Activated CD4-positive, alpha-beta memory T cell treated with anti-CD3 and anti-CD28 coated beads for 36 hours (primary cell): ENCODE measurements at regions of chr17 and their contacts with region 1.

Region 1: GRCh38 chr17:82297714-82298537 is 19.5 kb downstream of the CD7 start:
- DNase-seq: peak; percentile 96
- H3K4me3 Mint-ChIP-seq: peak overlapping the region; percentile 93
- H3K27ac Mint-ChIP-seq: peak overlapping the region; percentile 100
- H3K4me1 Mint-ChIP-seq: peaks cover 77% of the 10 kb centered on the region
- H3K27me3 Mint-ChIP-seq: no peaks in the 10 kb centered on the region

Region 2: DNA sequence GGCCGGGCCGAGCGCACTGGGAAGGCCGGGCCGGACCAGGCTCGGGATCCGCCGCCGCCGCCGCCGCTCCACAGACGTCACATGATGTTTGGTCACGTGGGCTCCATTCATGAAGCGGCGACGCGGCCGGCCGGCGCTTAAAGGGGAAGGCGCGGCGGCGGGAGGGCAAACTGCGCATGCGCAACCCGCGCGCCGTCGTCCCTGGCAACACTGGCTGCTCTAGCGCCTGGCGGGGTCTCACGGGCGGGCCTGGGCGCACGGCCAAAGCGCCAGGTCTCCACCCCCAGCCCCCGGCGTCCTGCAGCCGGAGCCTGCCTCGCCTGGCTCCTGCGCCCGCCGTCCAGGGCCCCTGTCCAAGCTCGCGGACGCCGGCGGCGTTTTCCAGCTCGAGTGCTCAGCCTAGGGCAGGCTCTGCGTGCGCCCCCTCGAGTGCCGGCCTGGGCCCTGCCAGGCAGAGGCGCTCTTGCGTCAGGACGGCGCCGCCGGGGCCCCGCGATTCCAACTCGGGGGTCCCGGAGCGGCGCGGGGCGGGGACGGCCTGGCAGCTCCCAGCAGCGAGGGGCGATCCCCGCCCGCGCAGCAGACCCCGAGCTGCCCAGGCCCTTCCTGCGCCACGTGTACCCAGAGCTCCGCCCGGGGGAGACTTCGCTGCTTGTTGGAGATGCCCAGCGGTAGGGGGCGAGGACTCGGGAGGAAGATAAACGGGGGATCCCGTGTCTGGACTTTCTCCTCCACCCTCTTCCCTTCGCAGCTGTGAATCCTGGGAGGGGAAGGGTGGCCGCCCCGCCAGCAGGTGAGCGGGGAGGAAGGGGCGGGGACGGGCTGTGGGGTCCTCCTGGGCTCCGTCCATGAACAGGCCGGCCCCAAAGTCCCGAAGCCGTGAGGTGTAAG is 370.0 kb before region 1 on chr17 and contains the start of gene MAFG:
- CTCF ChIA-PET with region 1: no interaction called
- POLR2A ChIA-PET with region 1: no interaction called
- intact Hi-C with region 1: no loop called
- DNase-seq: peak; percentile 92
- H3K4me3 Mint-ChIP-seq: peak within 1 kb of the TSS; percentile 83
- H3K27ac Mint-ChIP-seq: peak within 1 kb of the TSS; percentile 87
- H3K4me1 Mint-ChIP-seq: peaks cover 15% of the 10 kb centered on the region
- H3K27me3 Mint-ChIP-seq: peaks cover 11% of the 10 kb centered on the region
- total RNA-seq, gene MAFG: 23.4 to 24.1 TPM

Region 3: GRCh38 chr17:81980707-81981343 is 317.1 kb before region 1 on chr17:
- CTCF ChIA-PET with region 1: no interaction called
- POLR2A ChIA-PET with region 1: no interaction called
- intact Hi-C with region 1: no loop called
- DNase-seq: no peak
- H3K4me3 Mint-ChIP-seq: no peak overlapping the region
- H3K27ac Mint-ChIP-seq: no peak overlapping the region
- H3K4me1 Mint-ChIP-seq: peaks cover 35% of the 10 kb centered on the region
- H3K27me3 Mint-ChIP-seq: no peaks in the 10 kb centered on the region

Region 4: DNA sequence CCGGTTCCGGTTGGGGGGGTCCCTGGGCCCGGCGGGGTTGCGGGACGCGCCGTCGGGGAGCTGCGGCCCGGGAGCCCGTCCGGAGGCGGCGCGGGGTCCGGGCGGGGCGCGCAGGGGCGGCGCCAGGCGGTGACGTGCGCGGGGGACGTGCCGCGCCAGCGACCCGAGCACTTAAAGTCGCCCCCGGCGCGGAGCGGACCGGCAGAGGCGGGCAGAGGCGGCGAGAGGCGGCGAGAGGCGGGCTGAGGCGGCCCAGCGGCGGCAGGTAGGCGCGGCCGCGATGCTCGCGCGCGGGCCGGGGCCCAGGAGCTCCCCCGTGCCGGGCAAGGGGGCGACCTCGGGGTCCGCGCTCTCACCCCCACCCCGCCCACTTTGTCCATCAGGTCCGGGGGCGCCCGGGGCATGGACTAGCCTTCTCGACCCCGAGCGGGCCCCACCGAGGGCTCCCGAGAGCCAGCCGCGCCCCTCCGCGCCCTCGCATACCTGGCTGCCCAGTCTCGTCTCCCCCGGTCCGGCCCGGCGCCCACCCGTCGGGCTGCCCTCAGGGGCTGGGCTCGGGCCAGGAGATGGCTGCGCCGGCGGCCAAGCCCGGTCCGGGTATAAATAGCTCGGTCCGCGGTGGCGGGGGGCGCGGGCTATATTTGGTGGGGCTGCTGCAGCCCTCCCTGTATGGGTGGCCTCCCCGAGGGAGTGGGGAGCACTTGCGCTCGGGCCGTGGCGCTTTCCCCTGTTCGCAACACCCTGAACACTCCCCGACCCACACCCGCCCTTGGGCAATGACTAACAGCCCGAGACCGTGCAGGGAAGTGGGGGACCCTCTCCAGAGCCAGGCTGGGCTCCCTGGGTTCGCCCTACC is 68.9 kb before region 1 on chr17 and contains the start of gene SLC16A3:
- CTCF ChIA-PET with region 1: interaction called, 5 read pairs
- POLR2A ChIA-PET with region 1: interaction called, 10 read pairs
- intact Hi-C with region 1: no loop called
- DNase-seq: peak; percentile 66
- H3K4me3 Mint-ChIP-seq: peak within 1 kb of the TSS; percentile 82
- H3K27ac Mint-ChIP-seq: peak within 1 kb of the TSS; percentile 84
- H3K4me1 Mint-ChIP-seq: peaks cover 9% of the 10 kb centered on the region
- H3K27me3 Mint-ChIP-seq: no peaks in the 10 kb centered on the region
- total RNA-seq, gene SLC16A3: 97.4 to 99.7 TPM

Region 5: DNA sequence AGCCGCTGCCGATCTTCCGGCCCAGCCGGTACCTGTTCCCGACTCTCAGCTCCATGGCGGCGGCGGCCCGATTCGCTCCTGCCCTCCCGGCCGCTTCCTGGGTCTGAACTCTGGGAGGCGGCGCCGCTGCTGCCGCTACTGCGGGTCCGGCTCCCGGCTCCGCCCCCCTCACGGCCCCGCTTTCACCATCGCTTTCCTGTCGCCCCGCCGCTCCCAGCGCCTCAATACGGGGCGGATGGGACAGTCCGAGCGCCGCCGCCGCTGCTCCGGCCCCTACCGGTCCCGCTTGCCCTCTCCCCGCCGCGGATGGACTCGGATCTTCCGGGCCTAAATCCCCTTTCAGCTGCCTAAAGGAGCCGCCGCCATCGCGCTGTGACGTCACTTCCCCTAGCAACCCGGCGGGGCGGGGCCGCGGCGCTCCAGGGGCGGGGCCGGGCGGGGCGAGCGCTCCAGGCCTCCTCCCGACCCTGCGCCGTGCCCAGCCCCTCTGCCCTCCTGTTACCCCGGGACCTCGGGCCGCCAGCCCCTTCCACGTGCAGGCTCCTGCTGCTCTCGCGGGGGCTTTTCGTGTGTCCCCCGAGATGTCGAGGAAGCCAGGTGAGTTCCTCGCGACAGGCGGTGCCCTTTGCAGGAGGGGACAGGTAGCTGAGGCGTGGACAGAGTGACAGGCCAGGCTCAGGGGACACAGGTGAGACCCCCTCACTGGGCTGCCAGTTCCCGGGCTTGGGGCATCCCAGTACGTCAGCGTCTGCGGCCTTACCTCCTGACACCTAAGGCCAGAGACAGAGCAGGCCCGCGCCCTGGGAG is 24.4 kb before region 1 on chr17 and contains the start of gene CSNK1D:
- CTCF ChIA-PET with region 1: interaction called, 10 read pairs
- POLR2A ChIA-PET with region 1: interaction called, 19 read pairs
- intact Hi-C with region 1: no loop called
- DNase-seq: peak; percentile 94
- H3K4me3 Mint-ChIP-seq: peak within 1 kb of the TSS; percentile 88
- H3K27ac Mint-ChIP-seq: peak within 1 kb of the TSS; percentile 98
- H3K4me1 Mint-ChIP-seq: peaks cover 40% of the 10 kb centered on the region
- H3K27me3 Mint-ChIP-seq: no peaks in the 10 kb centered on the region
- total RNA-seq, gene CSNK1D: 110 to 111 TPM

Region 6: GRCh38 chr17:82309656-82310570 is 12.0 kb after region 1 on chr17:
- CTCF ChIA-PET with region 1: interaction called, 12 read pairs
- POLR2A ChIA-PET with region 1: interaction called, 67 read pairs
- intact Hi-C with region 1: loop called (anchors 1 kb)
- DNase-seq: no peak
- H3K4me3 Mint-ChIP-seq: no peak overlapping the region
- H3K27ac Mint-ChIP-seq: no peak overlapping the region
- H3K4me1 Mint-ChIP-seq: peaks cover 40% of the 10 kb centered on the region
- H3K27me3 Mint-ChIP-seq: no peaks in the 10 kb centered on the region

Region 7: DNA sequence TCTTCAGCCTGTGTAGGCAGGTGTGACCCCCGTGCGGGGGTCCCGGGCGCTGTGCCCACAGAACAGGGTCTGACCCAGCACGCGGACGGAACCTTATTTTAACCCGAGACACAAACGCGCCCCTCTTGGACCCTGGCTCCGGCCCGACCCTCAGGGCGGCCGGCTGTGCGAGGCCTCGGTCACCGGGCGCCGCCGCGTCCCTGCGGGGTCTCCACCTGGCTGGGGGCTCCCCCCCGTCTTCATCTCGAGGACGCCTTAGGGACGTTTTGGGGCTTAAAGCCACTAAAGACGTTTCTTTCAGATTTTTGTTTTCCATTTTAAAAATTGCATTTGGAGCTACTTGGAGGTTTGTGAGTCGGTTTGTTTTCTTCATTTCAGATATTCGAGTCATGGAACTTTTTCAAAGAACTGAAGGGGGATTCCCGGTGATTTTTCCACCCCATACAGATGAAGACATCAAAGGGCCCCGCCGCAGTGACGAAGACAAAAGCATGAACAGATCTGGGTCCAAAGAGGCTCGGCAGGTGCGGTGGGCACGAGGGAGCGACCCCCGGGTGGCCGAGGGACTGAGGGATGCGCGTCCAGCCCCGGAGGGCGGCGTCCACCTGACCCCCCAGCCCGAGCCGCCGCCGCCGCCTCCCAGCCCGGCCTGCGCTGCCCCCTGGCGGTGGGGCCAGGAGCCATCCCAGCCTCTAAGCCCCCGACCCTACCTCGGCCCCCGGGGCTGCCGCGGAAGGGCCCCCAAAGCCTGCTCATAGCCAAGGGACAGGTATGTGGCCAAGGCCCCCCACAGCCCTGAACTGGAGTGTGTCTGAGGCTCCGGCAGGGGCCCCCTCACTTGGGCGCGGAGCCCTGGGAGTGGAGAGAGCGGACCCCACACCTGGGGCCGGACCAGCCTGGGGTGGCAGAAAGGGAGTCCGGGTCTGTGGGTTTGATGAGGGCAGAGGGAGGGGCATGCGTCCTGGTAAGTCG is 23.3 kb after region 1 on chr17:
- CTCF ChIA-PET with region 1: interaction called, 113 read pairs
- POLR2A ChIA-PET with region 1: interaction called, 103 read pairs
- intact Hi-C with region 1: loop called (anchors 1 kb)
- DNase-seq: peak; percentile 88
- H3K4me3 Mint-ChIP-seq: peak overlapping the region; percentile 80
- H3K27ac Mint-ChIP-seq: no peak overlapping the region
- H3K4me1 Mint-ChIP-seq: peaks cover 32% of the 10 kb centered on the region
- H3K27me3 Mint-ChIP-seq: no peaks in the 10 kb centered on the region

Region 8: DNA sequence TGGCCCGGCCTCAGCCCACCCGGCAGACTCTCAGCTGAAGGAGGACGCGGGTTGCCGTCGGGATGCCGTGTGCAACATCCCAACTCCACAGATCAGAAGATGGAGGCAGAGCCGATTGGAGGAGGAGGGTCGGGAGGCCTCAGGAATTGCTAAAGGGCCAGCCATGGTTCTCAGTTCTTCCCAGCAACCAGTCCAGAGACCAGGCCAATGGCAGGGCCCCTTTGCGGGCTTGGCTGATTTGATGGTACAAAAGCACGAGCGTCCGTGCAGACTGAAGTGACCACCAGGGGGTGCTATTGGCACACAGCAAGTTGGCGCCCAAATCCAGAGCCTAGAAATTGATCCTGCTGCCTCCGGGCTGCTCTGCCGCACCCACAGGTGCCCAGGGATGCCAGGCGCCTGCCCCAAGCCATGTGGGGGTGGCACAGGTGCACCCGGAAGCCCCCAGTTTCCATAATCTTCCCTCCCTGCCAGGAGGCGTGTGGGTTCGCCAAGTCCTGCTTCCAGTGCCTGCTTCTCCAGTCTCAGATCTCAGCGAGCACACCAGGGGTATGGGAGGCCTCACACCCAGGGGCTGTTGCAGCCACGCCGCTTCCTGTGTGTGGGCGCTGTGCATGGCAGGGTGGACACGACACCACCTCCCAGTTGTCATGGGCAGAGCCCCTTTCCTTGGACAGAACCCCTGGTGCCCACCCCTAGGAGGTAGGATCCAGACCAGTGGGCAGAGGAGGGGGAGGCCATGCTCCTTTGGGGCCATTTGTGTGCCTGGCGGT is 54.0 kb after region 1 on chr17:
- CTCF ChIA-PET with region 1: interaction called, 27 read pairs
- POLR2A ChIA-PET with region 1: no interaction called
- intact Hi-C with region 1: loop called (anchors 5 kb)
- DNase-seq: peak; percentile 88
- H3K4me3 Mint-ChIP-seq: no peak overlapping the region
- H3K27ac Mint-ChIP-seq: no peak overlapping the region
- H3K4me1 Mint-ChIP-seq: peaks cover 4% of the 10 kb centered on the region
- H3K27me3 Mint-ChIP-seq: peaks cover 4% of the 10 kb centered on the region